Motor neuron (in vitro differentiated cells): ENCODE measurements at regions of chr1 and their contacts with region 1.

Region 1: GRCh38 chr1:111789666-111790316 is 34.1 kb downstream of the DDX20 start:
- ATAC-seq: peak in 1 of 8 experiments; percentile 12
- H3K4me3 ChIP-seq: no peak overlapping the region
- H3K27ac ChIP-seq: no peak overlapping the region
- H3K4me1 ChIP-seq: peaks cover 12 to 15% of the 10 kb centered on the region in 2 donors

Region 2: DNA sequence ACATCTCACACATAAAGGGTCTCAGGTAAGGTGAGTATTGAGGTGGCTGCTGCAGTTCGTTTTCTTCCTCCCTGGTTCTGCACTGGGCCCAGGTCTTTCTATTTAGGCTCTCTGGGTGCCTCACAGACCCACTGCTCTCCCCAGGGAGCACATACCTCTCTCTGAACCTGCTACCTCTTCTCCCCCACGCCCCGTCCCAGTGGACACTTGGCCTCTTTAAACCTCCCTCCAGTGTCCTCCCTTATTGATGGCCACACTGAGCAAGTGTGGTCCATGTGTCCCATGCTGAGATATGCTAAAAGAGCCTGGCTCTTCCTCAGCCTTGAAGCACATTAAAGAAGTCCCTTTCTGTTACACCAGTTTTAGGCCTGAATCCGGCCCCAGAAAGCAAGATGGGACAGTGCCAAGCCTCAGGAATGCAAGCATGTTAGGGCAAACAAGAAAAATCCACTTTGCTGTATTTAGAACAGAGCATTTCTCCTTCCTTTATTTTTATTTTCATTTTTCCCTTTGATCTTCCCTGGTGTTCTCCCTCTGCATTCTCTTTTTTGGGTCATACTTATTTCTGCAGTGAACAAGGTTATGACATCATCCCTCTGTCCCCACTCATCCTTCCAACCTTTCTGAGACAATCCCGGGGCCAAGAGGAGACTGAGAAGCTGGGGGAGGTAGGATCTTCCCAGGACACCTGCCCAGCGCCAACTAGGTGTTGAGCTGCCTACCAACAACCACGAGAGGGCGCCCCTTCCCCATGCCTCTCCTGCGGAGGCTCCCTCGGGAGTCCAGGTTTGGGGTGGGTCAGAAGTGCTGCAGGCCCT is 567.3 kb before region 1 on chr1:
- in situ Hi-C with region 1: loop called in 1 of 9 experiments (anchors 25 kb)
- ATAC-seq: peak; percentile 89 to 98 (median 96)
- H3K4me3 ChIP-seq: no peak overlapping the region
- H3K27ac ChIP-seq: no peak overlapping the region
- H3K4me1 ChIP-seq: peaks cover 0 to 7% of the 10 kb centered on the region in 2 donors

Region 3: DNA sequence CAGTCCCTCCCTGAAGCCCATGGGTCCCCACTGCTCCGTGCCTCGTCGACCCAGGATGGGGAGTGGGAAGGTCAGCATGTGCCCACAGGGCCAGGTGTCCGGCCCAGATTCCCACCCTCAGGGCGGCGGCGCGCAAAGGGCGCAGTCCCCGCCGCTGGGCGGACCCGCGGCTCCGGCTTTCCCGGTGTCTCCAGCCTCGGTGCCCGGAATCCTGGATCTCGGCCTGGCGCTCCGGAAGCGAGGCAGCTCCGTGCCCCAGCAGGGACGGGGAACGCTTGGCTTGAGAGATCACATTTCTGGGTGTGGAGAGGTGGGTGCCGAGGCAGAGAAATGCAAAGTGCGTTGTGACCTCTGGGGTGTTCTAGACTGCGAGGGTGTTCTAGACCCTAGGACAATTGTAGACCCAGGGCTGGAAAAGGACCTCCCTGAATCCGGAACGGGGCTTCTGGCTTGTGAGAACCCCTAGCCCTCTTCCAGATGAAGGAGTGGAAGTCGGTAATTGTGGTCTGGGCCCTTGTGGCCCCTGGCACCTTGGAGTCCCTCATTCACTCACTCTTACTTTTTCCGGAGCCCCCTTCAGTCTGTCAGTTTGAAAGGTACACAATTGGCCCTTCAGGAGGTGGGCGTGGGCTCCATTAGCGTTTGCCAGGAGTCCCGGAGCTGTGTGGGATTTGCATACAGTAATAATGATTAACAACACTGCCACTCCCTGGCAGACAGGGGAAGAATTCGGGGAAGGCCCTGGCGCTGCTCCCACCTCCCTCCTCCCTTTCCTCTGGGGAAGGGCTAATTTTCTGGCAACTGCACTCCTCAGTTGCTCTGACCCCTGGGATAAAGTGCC is 201.3 kb after region 1 on chr1:
- in situ Hi-C with region 1: loop called in 1 of 9 experiments (anchors 25 kb)
- ATAC-seq: peak; percentile 38 to 78 (median 57)
- H3K4me3 ChIP-seq: peak overlapping the region in 4 of 5 donors; percentile 47 to 78 (median 58)
- H3K27ac ChIP-seq: no peak overlapping the region
- H3K4me1 ChIP-seq: peaks cover 6 to 19% of the 10 kb centered on the region in 2 donors

Region 4: GRCh38 chr1:112337028-112337531 is 547.3 kb after region 1 on chr1:
- in situ Hi-C with region 1: loop called in 1 of 9 experiments (anchors 25 kb)
- ATAC-seq: peak in 3 of 8 experiments; percentile 92 to 97 (median 94)
- H3K4me3 ChIP-seq: no peak overlapping the region
- H3K27ac ChIP-seq: no peak overlapping the region
- H3K4me1 ChIP-seq: no peaks in the 10 kb centered on the region

Region 5: DNA sequence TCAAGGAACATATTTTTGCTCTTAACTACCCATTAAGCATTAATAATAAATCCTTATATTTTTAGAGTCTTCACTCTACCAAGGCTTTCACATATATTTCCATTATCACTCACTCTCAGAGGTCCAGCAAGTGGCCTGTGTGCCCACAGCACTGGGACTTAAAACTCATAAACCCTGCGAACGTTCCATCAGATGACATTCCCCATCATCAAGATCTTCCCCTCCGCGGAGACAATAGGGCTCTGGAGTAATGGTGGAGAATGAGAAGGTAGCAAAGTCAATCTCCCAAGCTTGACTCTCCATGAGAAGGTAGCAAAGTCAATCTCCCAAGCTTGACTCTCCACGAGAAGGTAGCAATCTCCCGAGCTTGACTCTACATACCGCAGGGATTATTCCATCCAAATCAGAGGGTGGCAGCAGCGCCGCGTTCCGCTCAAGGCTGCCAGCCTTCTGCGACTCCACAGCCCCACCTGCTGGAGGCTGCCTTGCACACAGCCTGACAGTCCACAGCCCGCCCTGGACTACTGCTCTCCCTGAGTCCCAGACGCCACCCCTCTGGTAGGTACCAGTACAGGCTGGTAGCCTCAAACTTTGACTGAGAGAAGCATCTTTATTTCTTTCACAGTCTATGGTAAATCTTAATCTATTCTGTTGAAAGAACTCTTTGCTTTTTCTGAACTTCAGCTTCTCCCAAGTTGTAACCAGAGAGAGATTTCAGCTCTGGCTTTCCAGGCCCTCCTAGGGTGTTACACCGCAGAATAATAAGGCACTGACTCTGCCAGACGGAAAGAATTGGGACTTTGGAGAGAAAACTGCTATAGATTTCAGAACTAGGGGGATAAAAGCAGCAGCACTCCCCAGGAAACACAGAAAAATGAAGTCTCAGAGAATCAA is 579.8 kb after region 1 on chr1:
- in situ Hi-C with region 1: loop called in 1 of 9 experiments (anchors 25 kb)
- ATAC-seq: peak; percentile 100
- H3K4me3 ChIP-seq: no peak overlapping the region
- H3K27ac ChIP-seq: no peak overlapping the region
- H3K4me1 ChIP-seq: no peaks in the 10 kb centered on the region